Mammary epithelial cell (primary cell): ENCODE measurements at regions of chr11 and their contacts with region 1.

Region 1: DNA sequence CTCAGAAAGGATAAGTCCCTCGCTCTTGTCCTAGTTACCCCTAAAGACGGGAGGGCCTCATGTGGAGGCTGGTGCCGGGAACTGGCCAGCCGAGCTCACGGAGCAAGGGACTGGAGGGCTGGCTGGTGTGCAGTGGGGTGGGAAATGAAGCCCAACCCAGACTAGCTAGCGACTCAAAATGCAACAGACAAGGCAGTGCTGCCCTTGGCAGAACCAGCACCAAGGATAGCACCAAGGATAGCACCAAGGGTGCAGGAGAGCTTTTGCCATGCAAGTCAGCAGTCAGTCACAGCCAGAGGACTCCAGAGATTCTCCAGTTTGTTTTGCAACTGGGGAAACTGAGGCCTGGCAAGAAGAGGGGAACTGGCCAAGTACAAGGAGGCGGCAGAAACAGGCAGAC is 6.5 kb upstream of the BATF2 start:
- DNase-seq: no peak
- H3K4me3 ChIP-seq: no peak overlapping the region
- H3K27ac ChIP-seq: no peak overlapping the region
- H3K4me1 ChIP-seq: peaks cover 20% of the 10 kb centered on the region
- H3K27me3 ChIP-seq: no peaks in the 10 kb centered on the region
- CTCF ChIP-seq: no peak

Region 2: DNA sequence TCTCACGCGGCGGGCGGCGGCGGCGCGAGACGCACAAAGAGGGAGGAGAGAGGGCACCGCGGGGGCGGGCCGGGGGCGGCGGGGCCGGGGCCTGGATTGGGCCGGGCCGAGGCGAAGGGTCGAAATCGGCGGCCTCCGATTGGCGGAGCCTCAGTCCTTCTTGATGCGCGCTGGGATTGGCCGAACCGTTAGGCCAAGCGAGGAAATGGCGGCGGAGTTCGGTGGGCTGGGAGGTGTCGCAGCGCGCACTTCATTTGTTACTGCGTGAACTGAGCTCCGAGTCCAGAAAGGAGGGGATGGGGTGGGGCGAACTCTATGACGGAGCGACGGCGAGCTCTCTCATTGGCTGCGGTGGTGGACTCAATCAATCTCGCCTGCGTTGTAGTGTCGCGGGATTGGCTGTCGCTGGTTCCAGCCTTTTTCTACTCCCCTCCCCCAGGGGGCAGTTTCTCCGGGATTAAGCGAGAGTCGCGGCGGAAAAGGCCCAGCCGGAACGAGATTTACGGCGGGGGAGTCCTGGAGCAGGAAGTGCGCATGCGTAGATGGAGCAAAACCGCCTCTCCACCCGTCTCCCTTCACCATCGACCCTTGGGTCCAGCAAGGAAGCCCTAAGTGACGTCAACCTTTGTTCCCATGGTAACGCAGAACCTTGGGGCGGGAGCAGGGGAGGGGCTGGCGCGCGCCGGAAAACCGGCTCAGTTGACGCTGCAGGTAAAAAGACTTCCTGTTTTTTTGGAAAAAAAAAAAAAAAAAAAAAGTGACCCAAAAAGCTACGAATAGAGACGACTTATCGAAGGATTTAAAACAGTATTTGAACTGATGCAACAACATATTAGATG is 224.6 kb before region 1 on chr11 and contains the start of gene SF1:
- CTCF ChIA-PET with region 1: no interaction called
- dilution Hi-C with region 1: loop called (anchors 10 kb)
- in situ Hi-C with region 1: no loop called
- intact Hi-C with region 1: no loop called
- DNase-seq: peak; percentile 100
- H3K4me3 ChIP-seq: peak within 1 kb of the TSS; percentile 84 to 90 (median 86)
- H3K27ac ChIP-seq: peak within 1 kb of the TSS; percentile 96
- H3K4me1 ChIP-seq: peaks cover 22% of the 10 kb centered on the region
- H3K27me3 ChIP-seq: no peaks in the 10 kb centered on the region
- CTCF ChIP-seq: no peak
- total RNA-seq, gene SF1: 115 to 294 TPM

Region 3: GRCh38 chr11:64905516-64906313 is 97.6 kb before region 1 on chr11:
- CTCF ChIA-PET with region 1: no interaction called
- dilution Hi-C with region 1: no loop called
- in situ Hi-C with region 1: no loop called
- intact Hi-C with region 1: no loop called
- DNase-seq: no peak
- H3K4me3 ChIP-seq: no peak overlapping the region
- H3K27ac ChIP-seq: no peak overlapping the region
- H3K4me1 ChIP-seq: peaks cover 2% of the 10 kb centered on the region
- H3K27me3 ChIP-seq: no peaks in the 10 kb centered on the region
- CTCF ChIP-seq: no peak

Region 4: DNA sequence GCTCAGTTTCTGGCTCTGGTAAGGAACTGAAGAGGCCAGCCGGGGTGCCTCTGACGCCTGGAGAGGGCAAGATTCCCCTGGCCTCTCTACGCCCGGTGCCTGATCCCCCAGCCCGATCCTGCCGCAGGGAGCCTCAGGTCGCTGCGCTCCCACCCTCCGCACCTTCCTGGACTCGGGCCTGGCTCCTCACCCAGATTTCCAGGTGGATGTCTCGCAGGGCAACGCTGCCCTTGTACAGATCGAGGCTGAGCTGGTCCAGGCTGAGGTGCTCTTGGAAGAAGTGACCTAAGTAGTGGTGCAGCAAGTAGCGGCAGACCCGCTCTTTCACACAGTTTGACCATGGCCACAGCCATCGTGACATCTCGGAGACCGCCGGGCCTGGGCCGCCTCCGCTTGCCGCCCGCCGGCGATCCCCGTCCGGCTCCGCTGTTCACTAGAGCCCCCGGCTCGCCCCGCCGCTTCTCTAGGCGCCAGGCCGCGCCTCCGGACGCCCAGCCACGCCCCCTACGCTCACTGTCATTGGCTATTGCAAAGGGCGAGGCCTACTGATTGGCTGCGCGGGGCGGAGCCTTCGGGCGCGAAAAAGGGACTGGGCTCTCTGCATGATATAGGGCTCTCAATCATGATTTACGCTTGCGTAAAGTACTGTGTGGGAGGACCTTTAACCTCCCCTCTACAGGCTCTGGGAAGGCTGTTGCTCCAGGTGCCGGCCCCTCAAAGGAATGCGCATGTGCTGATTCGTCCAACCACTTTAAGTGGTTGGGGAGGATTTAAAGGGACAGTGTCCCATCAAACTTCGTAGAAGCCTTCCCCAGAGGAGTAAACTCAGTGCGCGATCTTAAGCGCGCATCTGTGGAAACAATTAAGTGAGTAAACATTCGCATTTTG is 86.3 kb before region 1 on chr11 and contains the start of gene ATG2A:
- CTCF ChIA-PET with region 1: no interaction called
- dilution Hi-C with region 1: no loop called
- in situ Hi-C with region 1: no loop called
- intact Hi-C with region 1: loop called (anchors 2 kb)
- DNase-seq: peak; percentile 100
- H3K4me3 ChIP-seq: peak within 1 kb of the TSS; percentile 66 to 87 (median 71)
- H3K27ac ChIP-seq: peak within 1 kb of the TSS; percentile 70
- H3K4me1 ChIP-seq: peaks cover 9% of the 10 kb centered on the region
- H3K27me3 ChIP-seq: no peaks in the 10 kb centered on the region
- CTCF ChIP-seq: no peak
- total RNA-seq, gene ATG2A: 20.7 to 21.0 TPM

Region 5: GRCh38 chr11:64924102-64924851 is 79.0 kb before region 1 on chr11 and contains the start of gene PPP2R5B:
- CTCF ChIA-PET with region 1: no interaction called
- dilution Hi-C with region 1: no loop called
- in situ Hi-C with region 1: no loop called
- intact Hi-C with region 1: loop called (anchors 2 kb)
- DNase-seq: peak; percentile 88
- H3K4me3 ChIP-seq: peak within 1 kb of the TSS; percentile 77 to 88 (median 78)
- H3K27ac ChIP-seq: peak within 1 kb of the TSS; percentile 70
- H3K4me1 ChIP-seq: peaks cover 10% of the 10 kb centered on the region
- H3K27me3 ChIP-seq: no peaks in the 10 kb centered on the region
- CTCF ChIP-seq: no peak
- total RNA-seq, gene PPP2R5B: 13.8 to 32.7 TPM

Region 6: GRCh38 chr11:64935359-64936081 is 67.8 kb before region 1 on chr11 and contains the start of gene GPHA2:
- CTCF ChIA-PET with region 1: no interaction called
- dilution Hi-C with region 1: no loop called
- in situ Hi-C with region 1: loop called in 1 of 2 experiments (anchors 10 kb)
- intact Hi-C with region 1: no loop called
- DNase-seq: no peak
- H3K4me3 ChIP-seq: no peak within 1 kb of the TSS
- H3K27ac ChIP-seq: no peak within 1 kb of the TSS
- H3K4me1 ChIP-seq: no peaks in the 10 kb centered on the region
- H3K27me3 ChIP-seq: no peaks in the 10 kb centered on the region
- CTCF ChIP-seq: no peak
- total RNA-seq, gene GPHA2: not detected

Region 7: DNA sequence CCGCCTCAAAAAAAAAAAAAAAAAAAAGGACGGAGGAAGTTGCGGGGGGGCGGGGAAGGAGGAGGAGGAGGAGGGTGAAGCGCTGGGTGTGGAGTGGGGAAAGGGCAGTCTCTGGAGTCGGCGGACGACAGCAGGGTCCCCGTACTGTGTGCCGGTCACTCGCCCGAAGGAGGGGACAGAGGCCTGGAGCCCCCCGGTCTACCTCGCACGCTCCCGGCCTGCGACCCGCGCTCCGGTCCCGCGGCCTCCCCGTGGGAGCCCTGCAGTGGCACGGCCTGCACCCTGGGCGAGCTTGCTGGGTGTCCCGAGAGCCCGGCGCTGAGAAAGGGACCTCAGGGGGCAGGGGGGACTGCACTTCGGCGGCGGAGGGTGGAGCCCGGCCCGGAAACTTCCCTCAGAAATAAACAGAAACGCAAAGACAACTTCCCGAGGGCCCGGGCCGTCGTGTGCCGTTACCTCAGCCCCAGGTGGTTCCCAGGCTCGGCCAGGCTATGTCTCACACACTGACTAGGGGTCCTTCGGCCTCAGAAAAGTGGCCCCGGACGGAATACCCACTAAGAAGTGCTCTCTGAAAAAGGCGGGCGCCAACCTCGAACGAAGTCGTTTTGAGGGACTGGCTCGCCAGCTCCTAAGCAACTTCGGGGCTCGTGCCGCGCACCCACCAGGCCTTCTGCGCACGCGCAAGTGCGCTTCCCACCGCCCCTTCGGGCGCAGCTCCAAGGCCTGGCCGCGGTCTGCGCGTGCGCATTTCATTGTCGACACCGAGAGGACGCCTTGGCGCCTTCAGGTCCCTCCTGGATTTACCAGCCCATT is 31.7 kb before region 1 on chr11 and contains the start of gene MAJIN:
- CTCF ChIA-PET with region 1: no interaction called
- dilution Hi-C with region 1: no loop called
- in situ Hi-C with region 1: no loop called
- intact Hi-C with region 1: loop called (anchors 1 kb)
- DNase-seq: no peak
- H3K4me3 ChIP-seq: no peak within 1 kb of the TSS
- H3K27ac ChIP-seq: peak within 1 kb of the TSS; percentile 36
- H3K4me1 ChIP-seq: peaks cover 20% of the 10 kb centered on the region
- H3K27me3 ChIP-seq: no peaks in the 10 kb centered on the region
- CTCF ChIP-seq: no peak
- total RNA-seq, gene MAJIN: not detected